ENCODE measurements at regions of chr6 and their contacts with region 1.

Region 1: GRCh38 chr6:41066867-41067304 is 5.3 kb downstream of the OARD1 start:
- DNase-seq: peak in 1 of 2 experiments; percentile 70
- H3K4me3 ChIP-seq: no peak overlapping the region
- H3K27ac ChIP-seq: no peak overlapping the region
- H3K4me1 ChIP-seq: peaks cover 0 to 4% (median 1%) of the 10 kb centered on the region in 4 experiments; a peak in 2 of 7 replicates
- H3K27me3 ChIP-seq: no peaks in the 10 kb centered on the region
- CTCF ChIP-seq: peak in 2 of 3 experiments; percentile 54 to 79; a peak in 2 of 4 replicates
- EP300 ChIP-seq: no peak
- POLR2A ChIP-seq: no peak
- RAD21 ChIP-seq: peak; percentile 72 to 77

Region 2: GRCh38 chr6:40978687-40979289 is 88.1 kb before region 1 on chr6:
- CTCF ChIA-PET with region 1: no interaction called
- POLR2A ChIA-PET with region 1: no interaction called
- DNase-seq: peak in 1 of 2 experiments; percentile 32
- H3K4me3 ChIP-seq: no peak overlapping the region
- H3K27ac ChIP-seq: no peak overlapping the region
- H3K4me1 ChIP-seq: peaks cover 0 to 7% (median 2%) of the 10 kb centered on the region in 4 experiments; a peak in 5 of 7 replicates
- H3K27me3 ChIP-seq: no peaks in the 10 kb centered on the region
- CTCF ChIP-seq: no peak
- EP300 ChIP-seq: no peak
- POLR2A ChIP-seq: no peak
- RAD21 ChIP-seq: no peak

Region 3: DNA sequence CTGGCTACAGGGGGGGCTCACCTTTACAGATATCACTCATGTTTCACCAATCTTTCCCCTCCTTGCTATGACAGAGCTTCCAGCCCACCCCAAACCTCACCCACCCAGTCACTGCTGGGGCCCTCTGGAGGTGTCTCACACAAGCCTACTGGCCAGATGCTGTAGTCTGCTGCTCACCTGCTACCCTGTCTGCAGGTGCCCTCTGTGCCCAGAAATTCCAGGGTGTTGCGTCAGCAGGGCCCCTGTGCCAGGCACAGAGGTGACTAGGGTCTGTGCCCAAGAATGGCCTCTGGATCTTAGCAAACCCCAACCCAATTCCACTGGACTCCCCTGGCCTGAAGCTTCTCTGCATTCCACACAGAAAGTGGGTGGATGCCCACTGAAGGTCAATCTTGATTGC is 49.2 kb before region 1 on chr6:
- CTCF ChIA-PET with region 1: no interaction called
- POLR2A ChIA-PET with region 1: no interaction called
- DNase-seq: no peak
- H3K4me3 ChIP-seq: no peak overlapping the region
- H3K27ac ChIP-seq: no peak overlapping the region
- H3K4me1 ChIP-seq: no peaks in the 10 kb centered on the region
- H3K27me3 ChIP-seq: no peaks in the 10 kb centered on the region
- CTCF ChIP-seq: no peak
- EP300 ChIP-seq: no peak
- POLR2A ChIP-seq: no peak
- RAD21 ChIP-seq: no peak

Region 4: GRCh38 chr6:41051873-41052272 is 15.0 kb before region 1 on chr6:
- CTCF ChIA-PET with region 1: interaction called, 14 read pairs
- POLR2A ChIA-PET with region 1: interaction called, 6 read pairs
- DNase-seq: no peak
- H3K4me3 ChIP-seq: no peak overlapping the region
- H3K27ac ChIP-seq: no peak overlapping the region
- H3K4me1 ChIP-seq: peaks cover 0 to 5% (median 0%) of the 10 kb centered on the region in 4 experiments; a peak in 2 of 7 replicates
- H3K27me3 ChIP-seq: no peaks in the 10 kb centered on the region
- CTCF ChIP-seq: no peak
- EP300 ChIP-seq: no peak
- POLR2A ChIP-seq: no peak
- RAD21 ChIP-seq: no peak

Measured in H1 (cell line).